HepG2 (cell line): ENCODE measurements at regions of chr11 and their contacts with region 1.

Region 1: GRCh38 chr11:9565822-9566560 is 7.5 kb upstream of the WEE1 start:
- DNase-seq: peak; percentile 99
- ATAC-seq: peak; percentile 75
- H3K4me3 ChIP-seq: peak overlapping the region in 1 of 3 experiments; percentile 12; a peak in 1 of 6 replicates
- H3K27ac ChIP-seq: peak overlapping the region; percentile 100
- H3K4me1 ChIP-seq: peaks cover 68% of the 10 kb centered on the region
- H3K27me3 ChIP-seq: no peaks in the 10 kb centered on the region
- CTCF ChIP-seq: no peak
- EP300 ChIP-seq: peak; percentile 55 to 72; a peak in 2 of 4 replicates
- POLR2A ChIP-seq: peak in 1 of 2 experiments; percentile 58; a peak in 1 of 4 replicates
- RAD21 ChIP-seq: no peak

Region 2: DNA sequence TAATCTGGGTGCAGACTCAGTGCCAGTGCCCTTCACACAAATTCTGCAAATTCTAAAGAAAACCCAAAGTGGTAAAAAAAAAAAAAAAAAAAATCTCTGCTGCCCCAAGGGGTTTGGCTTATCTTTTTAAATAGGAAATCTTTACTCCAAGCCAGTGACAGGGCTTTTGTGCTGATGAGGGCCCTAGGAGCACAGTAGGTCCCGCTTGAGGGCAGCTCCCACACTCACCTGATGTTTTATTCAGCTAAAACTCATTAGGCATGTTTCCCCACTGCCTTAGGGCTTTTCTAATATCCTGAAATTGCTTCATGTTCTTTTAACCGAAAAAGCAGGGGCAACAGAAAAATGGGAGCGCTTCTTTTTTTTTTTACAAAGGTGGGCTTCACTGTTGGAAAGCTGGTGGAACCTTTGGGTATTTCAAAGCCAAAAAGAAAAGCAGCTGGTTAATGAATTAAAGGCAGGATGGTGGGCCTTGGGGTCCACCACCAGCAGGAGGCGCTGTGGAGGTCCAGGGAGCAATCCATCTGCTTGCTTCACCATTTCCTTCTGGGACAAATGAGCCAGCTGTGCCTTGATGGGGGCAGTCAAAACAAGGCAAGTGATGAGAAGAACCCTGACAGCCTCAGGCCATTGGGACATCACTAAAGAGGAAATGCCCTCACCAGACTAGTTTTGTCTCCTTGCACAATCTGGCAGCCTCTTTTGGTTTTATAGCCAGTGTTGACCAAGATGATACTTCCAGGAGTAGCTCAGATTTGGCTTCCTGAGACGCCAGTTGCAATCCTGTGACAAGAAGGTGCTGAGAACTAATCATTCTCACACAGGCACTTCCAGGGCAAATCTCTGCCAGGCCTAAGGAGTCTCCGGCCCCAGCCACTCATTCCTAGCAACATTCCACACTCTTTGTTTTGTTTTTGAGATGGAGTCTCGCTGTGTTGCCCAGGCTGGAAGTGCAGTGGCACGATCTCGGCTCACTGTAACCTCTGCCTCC is 30.9 kb before region 1 on chr11:
- CTCF ChIA-PET with region 1: no interaction called
- POLR2A ChIA-PET with region 1: interaction called, 21 read pairs
- in situ Hi-C with region 1: loop called (anchors 5 kb)
- intact Hi-C with region 1: loop called (anchors 2 kb)
- DNase-seq: peak; percentile 51
- ATAC-seq: peak; percentile 68
- H3K4me3 ChIP-seq: peak overlapping the region in 2 of 3 experiments; percentile 17 to 30; a peak in 3 of 6 replicates
- H3K27ac ChIP-seq: peak overlapping the region; percentile 12
- H3K4me1 ChIP-seq: peaks cover 50% of the 10 kb centered on the region
- H3K27me3 ChIP-seq: no peaks in the 10 kb centered on the region
- CTCF ChIP-seq: peak; percentile 83
- EP300 ChIP-seq: no peak
- POLR2A ChIP-seq: no peak
- RAD21 ChIP-seq: peak; percentile 81; the same call in 1 of the 2 replicates

Region 3: GRCh38 chr11:9550191-9550628 is 15.8 kb before region 1 on chr11:
- CTCF ChIA-PET with region 1: no interaction called
- POLR2A ChIA-PET with region 1: interaction called, 13 read pairs
- in situ Hi-C with region 1: no loop called
- intact Hi-C with region 1: no loop called
- DNase-seq: no peak
- ATAC-seq: no peak
- H3K4me3 ChIP-seq: no peak overlapping the region
- H3K27ac ChIP-seq: no peak overlapping the region
- H3K4me1 ChIP-seq: peaks cover 13% of the 10 kb centered on the region
- H3K27me3 ChIP-seq: no peaks in the 10 kb centered on the region
- CTCF ChIP-seq: no peak
- EP300 ChIP-seq: no peak
- POLR2A ChIP-seq: no peak
- RAD21 ChIP-seq: no peak